ENCODE measurements at regions of chr18 and their contacts with region 1.

Region 1: DNA sequence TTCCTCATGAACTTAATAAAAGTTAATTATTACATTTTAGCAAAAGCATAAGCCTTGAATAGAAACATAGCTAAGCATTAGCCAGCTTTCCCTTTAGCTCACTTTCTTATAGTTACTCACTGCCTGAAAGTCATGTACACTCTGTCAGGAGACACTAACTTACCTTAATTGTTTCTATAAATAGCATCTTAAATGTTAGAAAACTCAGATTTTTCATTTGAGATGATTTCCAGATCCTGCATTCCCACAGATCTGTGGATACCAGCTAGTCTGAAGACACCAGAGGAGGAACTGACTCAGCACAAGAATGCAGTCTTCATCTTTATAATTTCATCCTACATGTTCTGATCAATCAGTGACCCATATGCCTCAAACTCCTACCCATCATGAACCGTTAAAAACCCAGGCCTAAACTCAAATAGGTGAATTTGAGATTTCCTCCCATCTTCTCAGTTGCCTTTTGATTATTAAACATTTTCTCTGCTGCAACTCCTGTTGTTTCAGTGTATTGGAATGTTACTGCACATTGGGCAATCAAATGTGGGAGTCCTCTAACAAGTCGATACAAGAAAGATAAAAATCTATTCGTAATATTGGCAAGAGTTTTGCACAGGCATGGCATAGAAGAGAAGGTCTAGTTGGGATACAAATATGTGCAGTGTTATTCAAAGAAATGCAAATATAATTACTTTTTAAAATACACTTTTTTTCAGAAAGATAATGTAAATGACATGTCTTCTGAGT is 857.4 kb upstream of the CDH2 start:
- DNase-seq: no peak
- H3K4me3 ChIP-seq: no peak overlapping the region
- H3K4me3 Mint-ChIP-seq: no peak overlapping the region
- H3K27ac ChIP-seq: no peak overlapping the region
- H3K27ac Mint-ChIP-seq: no peak overlapping the region
- H3K4me1 ChIP-seq: no peaks in the 10 kb centered on the region
- H3K4me1 Mint-ChIP-seq: no peaks in the 10 kb centered on the region
- H3K27me3 ChIP-seq: no peaks in the 10 kb centered on the region
- H3K27me3 Mint-ChIP-seq: no peaks in the 10 kb centered on the region

Region 2: GRCh38 chr18:29083545-29083944 is 49.3 kb after region 1 on chr18:
- CTCF ChIA-PET with region 1: no interaction called
- POLR2A ChIA-PET with region 1: no interaction called
- intact Hi-C with region 1: loop called (anchors 10 kb)
- DNase-seq: no peak
- H3K4me3 ChIP-seq: no peak overlapping the region
- H3K4me3 Mint-ChIP-seq: no peak overlapping the region
- H3K27ac ChIP-seq: no peak overlapping the region
- H3K27ac Mint-ChIP-seq: no peak overlapping the region
- H3K4me1 ChIP-seq: no peaks in the 10 kb centered on the region
- H3K4me1 Mint-ChIP-seq: no peaks in the 10 kb centered on the region
- H3K27me3 ChIP-seq: no peaks in the 10 kb centered on the region
- H3K27me3 Mint-ChIP-seq: no peaks in the 10 kb centered on the region

Measured in CD4-positive, alpha-beta memory T cell (primary cell).